ENCODE measurements at regions of chr14 and their contacts with region 1.

Region 1: GRCh38 chr14:54347997-54348611 is 48.7 kb upstream of the CDKN3 start:
- DNase-seq: no peak
- H3K4me3 Mint-ChIP-seq: no peak overlapping the region
- H3K27ac Mint-ChIP-seq: no peak overlapping the region
- H3K4me1 Mint-ChIP-seq: peaks cover 2% of the 10 kb centered on the region
- H3K27me3 Mint-ChIP-seq: peaks cover 18% of the 10 kb centered on the region

Region 2: GRCh38 chr14:53295985-53296582 is 1052.0 kb before region 1 on chr14:
- CTCF ChIA-PET with region 1: interaction called, 9 read pairs
- intact Hi-C with region 1: loop called (anchors 10 kb)
- DNase-seq: peak; percentile 22
- H3K4me3 Mint-ChIP-seq: no peak overlapping the region
- H3K27ac Mint-ChIP-seq: no peak overlapping the region
- H3K4me1 Mint-ChIP-seq: no peaks in the 10 kb centered on the region
- H3K27me3 Mint-ChIP-seq: no peaks in the 10 kb centered on the region

Region 3: GRCh38 chr14:53432378-53432802 is 915.7 kb before region 1 on chr14:
- CTCF ChIA-PET with region 1: no interaction called
- intact Hi-C with region 1: loop called (anchors 2 kb)
- DNase-seq: no peak
- H3K4me3 Mint-ChIP-seq: no peak overlapping the region
- H3K27ac Mint-ChIP-seq: no peak overlapping the region
- H3K4me1 Mint-ChIP-seq: no peaks in the 10 kb centered on the region
- H3K27me3 Mint-ChIP-seq: peaks cover 4% of the 10 kb centered on the region

Region 4: DNA sequence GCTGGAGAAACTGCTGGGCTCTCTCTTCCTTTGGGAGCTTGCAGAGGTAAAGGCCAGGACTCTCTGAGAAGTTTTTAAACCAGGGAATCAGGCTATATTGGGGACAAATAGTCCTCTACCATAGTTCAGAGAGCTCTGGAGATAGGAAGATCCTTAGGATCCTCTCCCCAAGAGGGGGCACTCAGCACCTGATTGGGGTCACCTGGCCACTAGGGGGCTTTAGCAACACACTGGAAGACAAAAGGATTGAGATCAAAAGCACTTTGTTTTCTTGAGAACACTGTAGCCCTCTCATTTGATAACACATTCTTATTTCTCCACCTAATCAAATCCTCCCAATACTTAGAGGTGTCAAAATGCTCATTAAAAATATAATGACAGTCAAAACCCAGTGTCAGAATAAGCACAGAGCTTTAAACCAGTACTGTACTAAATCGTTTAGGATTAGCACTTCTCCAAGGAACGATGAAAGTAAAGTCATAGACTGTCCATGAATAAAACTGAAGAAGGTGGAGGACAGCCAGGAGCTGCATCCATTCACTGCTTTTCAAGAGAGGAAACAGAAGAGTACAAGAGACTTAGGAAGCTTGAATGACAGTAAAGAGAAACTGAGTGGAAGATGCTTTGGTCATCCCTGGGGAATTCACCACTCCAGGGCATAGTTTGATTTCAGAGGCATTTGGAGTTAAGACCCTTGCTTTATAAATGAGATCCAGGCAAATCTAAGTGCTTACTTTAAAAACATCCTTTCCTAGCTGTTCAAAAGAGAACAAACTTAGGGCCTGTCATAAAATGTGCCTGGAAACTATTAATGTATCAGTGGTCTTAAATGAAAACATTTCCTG is 418.0 kb before region 1 on chr14:
- CTCF ChIA-PET with region 1: interaction called, 6 read pairs
- intact Hi-C with region 1: loop called (anchors 1 kb)
- DNase-seq: peak; percentile 63
- H3K4me3 Mint-ChIP-seq: no peak overlapping the region
- H3K27ac Mint-ChIP-seq: no peak overlapping the region
- H3K4me1 Mint-ChIP-seq: no peaks in the 10 kb centered on the region
- H3K27me3 Mint-ChIP-seq: peaks cover 11% of the 10 kb centered on the region

Region 5: GRCh38 chr14:54291491-54292191 is 56.5 kb before region 1 on chr14:
- CTCF ChIA-PET with region 1: interaction called, 10 read pairs
- intact Hi-C with region 1: no loop called
- DNase-seq: no peak
- H3K4me3 Mint-ChIP-seq: no peak overlapping the region
- H3K27ac Mint-ChIP-seq: no peak overlapping the region
- H3K4me1 Mint-ChIP-seq: no peaks in the 10 kb centered on the region
- H3K27me3 Mint-ChIP-seq: peaks cover 17% of the 10 kb centered on the region

Region 6: GRCh38 chr14:54337314-54337713 is 10.8 kb before region 1 on chr14:
- CTCF ChIA-PET with region 1: interaction called, 14 read pairs
- intact Hi-C with region 1: no loop called
- DNase-seq: no peak
- H3K4me3 Mint-ChIP-seq: no peak overlapping the region
- H3K27ac Mint-ChIP-seq: no peak overlapping the region
- H3K4me1 Mint-ChIP-seq: no peaks in the 10 kb centered on the region
- H3K27me3 Mint-ChIP-seq: peaks cover 2% of the 10 kb centered on the region

Region 7: GRCh38 chr14:54709444-54709843 is 361.3 kb after region 1 on chr14:
- CTCF ChIA-PET with region 1: no interaction called
- intact Hi-C with region 1: no loop called
- DNase-seq: peak; percentile 20
- H3K4me3 Mint-ChIP-seq: no peak overlapping the region
- H3K27ac Mint-ChIP-seq: no peak overlapping the region
- H3K4me1 Mint-ChIP-seq: peaks cover 17% of the 10 kb centered on the region
- H3K27me3 Mint-ChIP-seq: no peaks in the 10 kb centered on the region

Measured in activated naive CD4-positive, alpha-beta T cell treated with anti-CD3 and anti-CD28 coated beads for 36 hours (primary cell).